ENCODE measurements at regions of chr2 and their contacts with region 1.

Region 1: GRCh38 chr2:88949336-88949735 is 257.9 kb downstream of the RPIA start:
- DNase-seq: no peak
- ATAC-seq: no peak

Region 2: GRCh38 chr2:88658326-88658725 is 291.0 kb before region 1 on chr2:
- intact Hi-C with region 1: no loop called
- DNase-seq: no peak
- ATAC-seq: peak in 1 of 2 donors; percentile 57

Region 3: GRCh38 chr2:88903749-88904353 is 45.5 kb before region 1 on chr2:
- intact Hi-C with region 1: loop called in 1 of 2 experiments (anchors 5 kb)
- DNase-seq: no peak
- ATAC-seq: peak; percentile 55 to 76